Activated T-helper 1 cell treated with anti-CD3 and anti-CD28 coated beads, Interleukin-12 subunit alpha, Interleukin-12 subunit beta, Interleukin-2, Interleukin-4 antibody, amounts not matched to agents 30 ng/mL and 10 ng/mL and 1 ng/mL, durations not matched to agents 14 hours and 24 hours and 36 hours (primary cell): ENCODE measurements at regions of chr7 and their contacts with region 1.

Region 1: DNA sequence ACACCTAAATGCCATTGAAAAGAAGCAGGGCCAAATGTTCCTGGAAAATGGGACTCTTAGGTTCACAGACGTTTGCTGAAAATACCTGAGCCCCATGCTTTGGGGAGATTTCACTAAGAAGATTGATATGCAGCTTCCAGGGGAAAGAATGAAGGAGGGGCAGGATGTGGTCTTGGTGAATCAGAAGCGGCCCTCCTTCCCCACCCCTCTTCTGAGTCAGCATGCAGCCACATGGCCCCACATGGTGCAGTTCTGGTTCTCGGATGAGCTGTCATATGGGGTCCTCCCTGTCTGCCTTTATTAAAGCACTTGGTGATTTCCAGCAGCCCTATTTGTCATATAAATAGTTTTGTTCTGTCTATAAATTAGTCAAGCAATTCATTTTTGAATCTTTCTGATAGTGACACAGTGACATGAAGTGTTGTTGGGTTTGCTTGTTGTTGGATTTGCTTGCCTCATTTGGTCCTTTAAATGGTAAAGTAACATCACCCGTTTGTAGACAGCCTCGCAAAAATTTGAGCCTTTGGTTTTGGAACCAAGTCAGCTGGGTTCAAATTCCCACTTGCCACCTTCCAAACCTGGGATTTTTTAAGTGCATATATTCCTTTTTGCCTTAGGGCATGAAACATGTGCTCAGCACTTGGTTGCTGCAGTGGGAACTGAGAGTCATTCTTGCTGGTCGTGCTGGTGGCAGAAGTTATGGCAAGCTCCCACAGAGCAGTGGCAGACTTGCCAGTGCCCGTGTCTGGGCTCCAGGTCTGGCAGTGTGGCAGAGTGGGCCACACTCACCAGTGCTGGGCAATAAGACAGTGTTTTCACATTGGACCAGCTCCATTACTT is 68.1 kb upstream of the CDK6 start:
- DNase-seq: peak; percentile 82
- H3K4me3 Mint-ChIP-seq: peak overlapping the region; percentile 55
- H3K27ac Mint-ChIP-seq: peak overlapping the region; percentile 94
- H3K4me1 Mint-ChIP-seq: peaks cover 28% of the 10 kb centered on the region
- H3K27me3 Mint-ChIP-seq: no peaks in the 10 kb centered on the region

Region 2: DNA sequence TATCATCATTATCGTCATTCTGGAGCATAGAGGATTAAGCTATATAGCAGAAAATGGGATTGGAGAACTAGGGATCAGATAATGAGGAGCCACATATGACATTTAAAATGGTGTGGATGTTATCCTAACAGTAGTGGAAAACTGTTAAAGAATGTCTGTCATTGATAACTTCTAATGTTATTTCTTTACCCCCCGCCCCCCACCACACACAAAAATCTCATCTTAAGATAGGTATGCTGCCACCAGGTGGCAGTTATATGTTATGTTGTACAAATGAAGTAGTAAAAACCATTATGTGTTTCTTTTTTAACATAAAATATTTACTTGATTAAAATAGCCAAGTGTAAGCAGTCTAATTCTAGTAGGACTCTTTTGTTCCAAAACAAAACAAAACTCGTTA is 950.9 kb before region 1 on chr7:
- intact Hi-C with region 1: no loop called
- DNase-seq: no peak
- H3K4me3 Mint-ChIP-seq: no peak overlapping the region
- H3K27ac Mint-ChIP-seq: no peak overlapping the region
- H3K4me1 Mint-ChIP-seq: peaks cover 9% of the 10 kb centered on the region
- H3K27me3 Mint-ChIP-seq: no peaks in the 10 kb centered on the region

Region 3: DNA sequence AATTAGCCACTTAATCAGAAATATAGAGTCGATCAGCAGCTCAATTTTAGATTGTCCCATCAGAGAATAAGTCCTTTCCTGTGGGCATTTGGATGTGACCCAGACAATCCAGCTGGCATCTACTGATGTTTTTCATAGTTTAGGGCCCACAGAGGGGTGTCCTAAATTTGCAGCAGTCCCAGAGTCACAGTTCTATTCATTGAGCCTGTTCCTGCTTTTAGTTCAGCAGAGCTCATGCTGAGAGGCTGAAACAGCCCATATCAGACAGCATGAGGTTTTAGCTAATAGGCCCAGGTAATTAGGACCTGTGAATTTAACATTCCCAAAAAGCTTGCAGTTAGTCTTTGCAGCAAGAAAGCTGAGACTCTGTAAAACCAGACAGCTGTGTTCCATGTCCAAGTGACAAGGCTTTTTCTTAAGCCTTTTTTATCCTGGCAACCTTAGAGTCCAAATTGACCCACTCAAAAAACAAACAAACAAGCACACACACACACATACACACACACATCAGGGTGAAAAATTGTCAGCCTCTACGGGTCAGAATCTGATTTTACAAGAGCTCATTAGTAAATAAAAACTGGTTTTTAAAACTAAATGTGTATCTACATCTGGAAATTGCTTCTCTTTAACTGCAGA is 625.0 kb before region 1 on chr7:
- intact Hi-C with region 1: no loop called
- DNase-seq: no peak
- H3K4me3 Mint-ChIP-seq: no peak overlapping the region
- H3K27ac Mint-ChIP-seq: no peak overlapping the region
- H3K4me1 Mint-ChIP-seq: peaks cover 7% of the 10 kb centered on the region
- H3K27me3 Mint-ChIP-seq: no peaks in the 10 kb centered on the region

Region 4: GRCh38 chr7:92633211-92633906 is 271.2 kb before region 1 on chr7:
- intact Hi-C with region 1: loop called (anchors 1 kb)
- DNase-seq: peak; percentile 48
- H3K4me3 Mint-ChIP-seq: peak overlapping the region; percentile 64
- H3K27ac Mint-ChIP-seq: peak overlapping the region; percentile 94
- H3K4me1 Mint-ChIP-seq: peaks cover 80% of the 10 kb centered on the region
- H3K27me3 Mint-ChIP-seq: no peaks in the 10 kb centered on the region

Region 5: DNA sequence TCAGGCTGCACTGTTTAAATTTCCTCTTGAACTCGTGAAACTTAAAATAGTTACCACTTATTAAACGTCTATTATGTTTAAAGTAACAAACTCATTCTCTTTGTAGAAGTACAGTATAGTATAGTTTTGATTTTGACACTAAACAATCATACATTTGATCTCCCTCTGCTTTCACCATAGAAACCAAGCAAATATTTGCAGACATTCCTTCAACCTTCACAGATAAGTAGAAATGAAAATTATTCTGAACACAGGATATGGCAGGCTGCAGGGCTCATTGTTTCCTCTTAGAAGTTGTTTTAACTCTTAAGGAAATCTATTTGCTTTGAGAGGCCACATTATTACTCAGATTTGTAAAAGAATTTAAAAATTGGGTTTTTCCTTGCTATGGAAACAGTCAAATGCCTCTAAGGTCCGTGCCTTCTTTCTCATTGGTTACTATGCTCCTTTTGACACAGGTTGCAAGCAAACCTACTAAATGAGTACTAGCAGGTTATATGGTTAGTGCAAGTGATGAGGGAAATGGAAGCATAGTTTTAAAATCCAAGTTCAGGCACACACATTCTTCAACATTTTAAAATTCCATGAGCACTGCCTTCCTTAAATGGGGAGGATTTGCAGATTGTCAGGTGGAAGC is 221.5 kb before region 1 on chr7:
- intact Hi-C with region 1: loop called (anchors 1 kb)
- DNase-seq: no peak
- H3K4me3 Mint-ChIP-seq: peak overlapping the region; percentile 57
- H3K27ac Mint-ChIP-seq: peak overlapping the region; percentile 95
- H3K4me1 Mint-ChIP-seq: peaks cover 90% of the 10 kb centered on the region
- H3K27me3 Mint-ChIP-seq: no peaks in the 10 kb centered on the region

Region 6: DNA sequence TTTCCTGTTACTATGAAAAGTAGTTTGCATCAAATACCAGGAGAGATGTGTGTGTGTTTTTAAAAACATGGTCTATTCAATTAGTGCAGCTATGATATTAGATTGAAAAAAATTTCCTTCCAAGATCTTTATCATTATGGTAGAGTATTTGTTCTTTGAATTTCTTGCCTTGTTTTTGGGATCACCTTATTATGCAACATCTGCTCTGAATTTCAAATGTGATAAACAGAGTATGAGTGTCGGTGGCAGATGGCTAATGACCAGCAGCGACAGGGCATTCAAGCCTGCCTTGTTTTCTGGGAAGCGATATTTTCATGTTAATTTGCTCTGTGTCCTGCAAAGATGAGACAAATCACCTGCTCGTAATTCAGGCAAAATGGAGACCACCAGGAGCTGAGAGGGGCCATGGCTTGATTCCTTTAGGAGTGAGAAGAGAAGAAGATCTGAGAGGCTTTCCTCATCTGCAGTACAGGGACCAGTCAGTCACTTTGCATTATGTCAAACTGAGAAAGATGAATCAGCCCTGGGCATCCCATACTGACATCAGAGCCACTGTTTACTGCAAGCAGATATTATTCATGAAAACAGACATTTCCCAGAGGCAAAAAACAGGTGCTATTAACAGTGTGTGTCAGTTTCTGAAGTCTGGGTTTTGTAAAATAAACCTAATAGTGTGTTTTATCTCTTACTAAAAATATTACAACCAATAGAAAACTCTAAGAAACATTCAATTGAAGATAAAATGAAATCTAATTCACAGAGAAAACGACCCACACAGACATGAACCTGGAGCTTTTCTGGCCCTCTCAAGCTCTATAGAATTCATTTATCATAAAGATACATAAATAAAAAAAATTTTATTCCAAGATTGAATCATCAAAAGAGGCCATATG is 135.8 kb before region 1 on chr7:
- intact Hi-C with region 1: loop called (anchors 1 kb)
- DNase-seq: peak; percentile 20
- H3K4me3 Mint-ChIP-seq: peak overlapping the region; percentile 47
- H3K27ac Mint-ChIP-seq: peak overlapping the region; percentile 85
- H3K4me1 Mint-ChIP-seq: peaks cover 83% of the 10 kb centered on the region
- H3K27me3 Mint-ChIP-seq: no peaks in the 10 kb centered on the region

Region 7: GRCh38 chr7:92797693-92798092 is 106.8 kb before region 1 on chr7:
- intact Hi-C with region 1: no loop called
- DNase-seq: peak; percentile 27
- H3K4me3 Mint-ChIP-seq: no peak overlapping the region
- H3K27ac Mint-ChIP-seq: no peak overlapping the region
- H3K4me1 Mint-ChIP-seq: peaks cover 43% of the 10 kb centered on the region
- H3K27me3 Mint-ChIP-seq: no peaks in the 10 kb centered on the region

Region 8: GRCh38 chr7:92880212-92881090 is 24.1 kb before region 1 on chr7:
- intact Hi-C with region 1: loop called (anchors 1 kb)
- DNase-seq: no peak
- H3K4me3 Mint-ChIP-seq: no peak overlapping the region
- H3K27ac Mint-ChIP-seq: no peak overlapping the region
- H3K4me1 Mint-ChIP-seq: peaks cover 67% of the 10 kb centered on the region
- H3K27me3 Mint-ChIP-seq: no peaks in the 10 kb centered on the region

Region 9: GRCh38 chr7:93015779-93016481 is 111.4 kb after region 1 on chr7:
- intact Hi-C with region 1: no loop called
- DNase-seq: no peak
- H3K4me3 Mint-ChIP-seq: no peak overlapping the region
- H3K27ac Mint-ChIP-seq: peak overlapping the region; percentile 65
- H3K4me1 Mint-ChIP-seq: peaks cover 27% of the 10 kb centered on the region
- H3K27me3 Mint-ChIP-seq: no peaks in the 10 kb centered on the region

Region 10: GRCh38 chr7:93055543-93056107 is 151.1 kb after region 1 on chr7:
- intact Hi-C with region 1: loop called (anchors 1 kb)
- DNase-seq: no peak
- H3K4me3 Mint-ChIP-seq: no peak overlapping the region
- H3K27ac Mint-ChIP-seq: no peak overlapping the region
- H3K4me1 Mint-ChIP-seq: peaks cover 19% of the 10 kb centered on the region
- H3K27me3 Mint-ChIP-seq: peaks cover 6% of the 10 kb centered on the region